Common myeloid progenitor, CD34-positive (primary cell): ENCODE measurements at regions of chr17 and their contacts with region 1.

Region 1: GRCh38 chr17:63842540-63843386 is at the start of gene SMARCD2:
- DNase-seq: peak; percentile 98 to 99 (median 99)
- H3K4me3 ChIP-seq: peak within 1 kb of the TSS; percentile 72 to 90 (median 86)
- H3K27ac ChIP-seq: peak within 1 kb of the TSS; percentile 61 to 86
- H3K4me1 ChIP-seq: peaks cover 17 to 49% (median 47%) of the 10 kb centered on the region in 4 experiments
- H3K27me3 ChIP-seq: no peaks in the 10 kb centered on the region

Region 2: DNA sequence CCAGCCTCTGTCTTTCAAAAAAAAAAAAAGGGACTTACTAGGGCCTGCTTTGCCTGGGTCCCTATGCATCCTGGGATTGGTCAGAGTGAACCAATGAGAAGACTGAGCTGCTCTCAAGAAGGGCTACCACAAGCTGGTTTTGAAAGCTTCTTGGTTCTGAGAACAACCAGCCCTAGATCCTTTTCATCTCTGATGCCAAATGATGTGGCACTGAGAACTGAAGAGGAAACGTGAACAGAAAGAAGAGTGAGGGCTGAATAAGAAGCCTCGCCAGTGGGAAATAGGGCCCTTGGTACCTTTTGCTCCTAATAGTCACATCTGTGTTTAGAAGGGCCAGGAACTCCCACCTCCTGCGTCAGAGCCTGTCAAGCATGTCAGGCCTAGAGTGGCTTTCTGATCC is 231.4 kb before region 1 on chr17:
- CTCF ChIA-PET with region 1: no interaction called
- POLR2A ChIA-PET with region 1: no interaction called
- DNase-seq: no peak
- H3K4me3 ChIP-seq: no peak overlapping the region
- H3K27ac ChIP-seq: no peak overlapping the region
- H3K4me1 ChIP-seq: peaks cover 0 to 1% (median 0%) of the 10 kb centered on the region in 4 experiments
- H3K27me3 ChIP-seq: no peaks in the 10 kb centered on the region

Region 3: GRCh38 chr17:63816669-63817068 is 26.1 kb before region 1 on chr17:
- CTCF ChIA-PET with region 1: no interaction called
- POLR2A ChIA-PET with region 1: no interaction called
- DNase-seq: no peak
- H3K4me3 ChIP-seq: no peak overlapping the region
- H3K27ac ChIP-seq: no peak overlapping the region
- H3K4me1 ChIP-seq: peaks cover 0 to 8% (median 2%) of the 10 kb centered on the region in 4 experiments
- H3K27me3 ChIP-seq: no peaks in the 10 kb centered on the region

Region 4: DNA sequence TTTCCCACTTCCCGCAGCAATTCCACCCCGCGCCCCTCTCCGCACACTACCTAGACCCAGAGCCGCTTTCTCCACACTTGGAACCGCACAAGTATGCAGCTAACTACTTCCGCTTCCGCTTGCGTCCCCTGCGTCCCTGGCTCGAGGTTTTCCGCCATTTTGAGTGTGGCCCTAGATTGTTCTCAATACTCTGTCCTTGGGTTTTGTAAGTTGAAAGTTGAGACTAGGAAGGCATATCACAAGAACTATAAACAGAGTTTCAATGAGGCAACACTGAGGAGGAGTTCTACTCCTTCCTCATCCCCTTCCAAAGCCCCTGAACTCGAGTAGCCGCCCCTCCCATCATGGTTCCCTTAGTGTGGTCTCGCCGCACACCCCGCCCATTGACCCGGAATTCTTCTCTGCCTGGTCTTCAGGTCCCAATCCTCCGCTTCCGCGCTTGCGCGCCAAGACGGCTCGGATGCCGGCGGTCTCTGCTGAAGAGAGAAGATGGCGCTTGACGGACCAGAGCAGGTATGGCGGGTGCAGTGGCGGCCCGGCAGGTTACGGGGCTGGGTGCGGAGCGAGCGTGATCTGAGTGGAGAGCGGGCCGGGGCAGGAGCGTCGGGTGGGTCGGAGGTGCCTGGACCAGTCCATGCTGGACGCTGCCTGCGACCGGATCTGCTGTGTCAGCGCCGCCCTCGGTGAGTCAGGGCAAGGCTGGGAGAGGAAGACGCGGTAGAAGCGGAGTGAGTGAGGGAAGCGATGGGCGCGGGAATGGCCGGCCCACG is 15.6 kb before region 1 on chr17 and contains the starts of genes FTSJ3 and PSMC5:
- CTCF ChIA-PET with region 1: interaction called, 51 read pairs
- POLR2A ChIA-PET with region 1: interaction called, 4 read pairs
- DNase-seq: peak; percentile 96 to 98 (median 97)
- H3K4me3 ChIP-seq: peak within 1 kb of the TSS; percentile 91 to 99 (median 96)
- H3K27ac ChIP-seq: peak within 1 kb of the TSS; percentile 93 to 98
- H3K4me1 ChIP-seq: peaks cover 13 to 38% (median 28%) of the 10 kb centered on the region in 4 experiments
- H3K27me3 ChIP-seq: no peaks in the 10 kb centered on the region

Region 5: DNA sequence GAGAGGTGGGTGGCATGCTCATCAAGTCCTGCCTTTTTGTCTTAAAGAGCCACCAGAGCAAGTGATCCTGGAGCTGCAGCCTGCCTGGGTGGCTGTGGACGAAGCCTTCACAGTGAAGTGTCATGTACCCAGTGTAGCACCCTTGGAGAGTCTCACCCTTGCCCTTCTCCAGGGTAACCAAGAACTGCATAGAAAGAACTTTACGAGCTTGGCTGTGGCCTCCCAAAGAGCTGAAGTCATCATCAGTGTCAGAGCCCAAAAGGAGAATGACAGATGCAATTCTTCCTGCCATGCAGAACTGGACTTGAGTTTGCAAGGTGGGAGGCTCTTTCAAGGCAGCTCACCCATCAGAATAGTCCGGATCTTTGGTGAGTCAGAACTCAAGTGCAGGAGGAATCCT is 16.5 kb after region 1 on chr17:
- CTCF ChIA-PET with region 1: interaction called, 36 read pairs
- POLR2A ChIA-PET with region 1: no interaction called
- DNase-seq: no peak
- H3K4me3 ChIP-seq: no peak overlapping the region
- H3K27ac ChIP-seq: no peak overlapping the region
- H3K4me1 ChIP-seq: no peaks in the 10 kb centered on the region
- H3K27me3 ChIP-seq: no peaks in the 10 kb centered on the region